T-cell (primary cell): ENCODE measurements at regions of chr3 and their contacts with region 1.

Region 1: DNA sequence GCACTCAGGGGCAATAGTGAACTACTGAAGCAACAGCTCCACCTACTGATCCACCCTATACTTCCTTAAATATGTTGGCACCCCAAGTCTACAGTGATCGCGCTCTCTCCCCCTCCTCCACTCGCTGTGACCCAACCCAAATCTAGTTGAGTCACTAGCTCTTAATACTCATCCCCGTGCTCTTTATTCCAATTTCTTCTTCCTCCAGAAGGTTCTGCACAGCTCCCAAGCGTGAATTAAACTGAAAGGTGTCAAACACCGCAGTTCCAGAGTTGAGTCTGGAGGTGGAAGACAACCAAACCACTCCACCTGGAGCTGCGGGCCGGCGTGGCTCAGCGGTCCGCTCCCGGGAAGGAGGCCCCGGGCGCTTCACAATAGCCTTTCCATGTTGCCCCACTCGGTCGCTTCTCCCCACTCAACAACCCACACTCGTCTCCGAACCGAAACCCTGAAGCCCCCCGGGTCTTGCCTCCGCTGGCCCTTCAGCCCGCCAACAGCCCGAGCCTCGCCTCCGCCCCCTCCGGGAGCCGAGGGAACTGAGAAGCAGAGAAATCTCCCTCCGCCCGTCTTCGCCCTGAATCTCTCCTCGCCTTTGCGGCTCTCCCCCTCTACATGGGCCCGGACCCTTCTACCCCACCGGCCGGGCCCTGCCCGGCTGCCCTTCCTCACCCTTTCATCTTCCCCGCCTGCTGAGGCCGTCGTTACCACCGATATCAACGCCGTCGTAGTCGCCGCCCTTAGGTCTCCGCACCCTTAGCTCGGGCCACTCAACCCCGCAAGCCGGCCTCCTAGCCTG is 578 bp downstream of the NAA50 start:
- DNase-seq: peak; percentile 48 to 93 (median 78)
- ATAC-seq: peak; percentile 68 to 73 (median 70)
- H3K4me3 ChIP-seq: peak overlapping the region; percentile 68 to 91
- H3K4me3 Mint-ChIP-seq: peak overlapping the region; percentile 92 to 100 (median 95)
- H3K27ac ChIP-seq: peak overlapping the region; percentile 100
- H3K27ac Mint-ChIP-seq: peak overlapping the region; percentile 97 to 100
- H3K4me1 ChIP-seq: peaks cover 23 to 25% of the 10 kb centered on the region in 2 experiments
- H3K4me1 Mint-ChIP-seq: peaks cover 67 to 84% (median 73%) of the 10 kb centered on the region in 3 donors
- H3K27me3 ChIP-seq: no peaks in the 10 kb centered on the region
- H3K27me3 Mint-ChIP-seq: no peaks in the 10 kb centered on the region

Region 2: DNA sequence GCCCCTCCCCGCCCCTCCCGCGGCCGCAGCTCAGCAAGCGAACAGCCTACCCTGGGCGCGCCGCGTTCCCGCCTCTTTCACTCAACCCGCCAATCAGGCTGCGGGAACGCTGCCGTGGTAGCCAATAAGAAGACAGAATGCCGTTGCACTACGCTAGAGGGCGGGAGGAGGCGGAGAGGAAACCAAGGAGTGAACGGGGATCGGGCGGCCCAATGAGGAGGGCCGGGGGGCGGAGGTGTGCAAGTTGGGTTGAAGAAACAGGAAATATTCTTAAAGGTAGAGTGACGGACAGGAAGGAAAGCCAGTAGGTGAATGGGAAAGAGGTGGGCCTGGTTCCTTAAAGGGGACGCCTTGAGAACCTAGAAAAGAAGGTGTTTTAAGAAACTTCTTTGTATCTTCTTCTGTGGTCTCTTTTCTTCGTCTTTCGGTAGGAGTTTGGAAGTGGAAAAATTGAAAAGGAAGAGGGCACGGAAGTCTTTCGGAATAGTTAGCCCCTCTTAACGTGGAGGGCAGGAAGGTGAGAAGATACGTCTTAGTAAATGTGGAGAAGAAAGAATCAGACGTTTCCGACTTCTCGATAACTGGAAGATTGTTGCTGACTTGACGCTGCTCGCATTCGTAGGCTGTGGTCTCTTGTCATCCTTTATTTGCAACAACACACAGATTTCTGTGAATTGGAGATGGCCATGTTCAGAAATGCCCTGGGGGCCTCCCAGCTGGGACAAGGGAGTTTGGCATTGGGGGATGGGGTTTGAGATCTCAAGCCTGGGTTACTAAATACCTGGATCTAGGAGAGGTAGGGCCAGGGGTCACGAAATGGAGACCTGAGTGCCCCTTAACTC is 48.6 kb before region 1 on chr3:
- CTCF ChIA-PET with region 1: interaction called, 3 to 10 read pairs
- POLR2A ChIA-PET with region 1: interaction called in 1 of 2 experiments, 15 read pairs
- DNase-seq: peak; percentile 97 to 100 (median 99)
- ATAC-seq: peak; percentile 81 to 85 (median 82)
- H3K4me3 ChIP-seq: peak overlapping the region; percentile 73 to 97
- H3K4me3 Mint-ChIP-seq: no peak overlapping the region
- H3K27ac ChIP-seq: peak overlapping the region; percentile 82
- H3K27ac Mint-ChIP-seq: no peak overlapping the region
- H3K4me1 ChIP-seq: peaks cover 19 to 22% of the 10 kb centered on the region in 2 experiments
- H3K4me1 Mint-ChIP-seq: peaks cover 30 to 33% (median 30%) of the 10 kb centered on the region in 3 donors
- H3K27me3 ChIP-seq: no peaks in the 10 kb centered on the region
- H3K27me3 Mint-ChIP-seq: no peaks in the 10 kb centered on the region

Region 3: DNA sequence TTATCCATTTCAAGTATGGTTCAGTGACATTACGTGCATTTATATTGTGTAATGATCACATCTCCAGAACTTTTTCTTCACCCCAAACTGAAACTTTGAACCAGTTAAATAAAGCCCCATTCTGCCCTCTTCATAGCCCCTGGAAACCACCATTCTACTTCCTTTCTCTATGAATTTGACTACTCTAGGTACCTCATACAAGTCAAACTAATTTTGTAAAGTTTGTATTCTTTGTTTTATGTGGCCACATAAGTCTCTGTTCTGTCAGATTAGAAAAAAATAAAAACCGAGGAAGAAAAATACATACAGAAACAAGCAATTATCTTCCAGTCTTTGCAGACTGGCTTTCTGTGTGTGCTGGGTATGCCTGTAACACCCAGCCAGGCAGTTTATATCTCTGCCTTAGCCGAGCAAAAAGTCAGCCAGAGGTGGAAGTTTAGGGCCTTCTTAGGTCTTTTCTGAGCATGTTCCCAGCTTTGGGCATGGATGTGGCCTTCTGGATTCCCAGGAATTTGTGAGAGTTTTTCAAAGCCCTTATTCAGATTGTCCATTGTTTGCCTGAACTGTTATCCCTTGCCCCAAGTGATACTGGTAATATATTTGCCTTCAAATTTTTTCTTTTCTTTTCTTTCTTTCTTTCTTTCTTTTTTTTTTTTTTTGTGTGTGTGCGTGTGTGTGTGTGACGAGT is 87.2 kb after region 1 on chr3:
- CTCF ChIA-PET with region 1: no interaction called
- POLR2A ChIA-PET with region 1: no interaction called
- DNase-seq: peak in 1 of 35 experiments; percentile 16
- ATAC-seq: peak in 1 of 4 experiments; percentile 84
- H3K4me3 ChIP-seq: no peak overlapping the region
- H3K4me3 Mint-ChIP-seq: no peak overlapping the region
- H3K27ac ChIP-seq: no peak overlapping the region
- H3K27ac Mint-ChIP-seq: peak overlapping the region; percentile 47 to 60
- H3K4me1 ChIP-seq: peaks cover 3 to 4% of the 10 kb centered on the region in 2 experiments
- H3K4me1 Mint-ChIP-seq: peaks cover 0 to 30% (median 20%) of the 10 kb centered on the region in 3 donors
- H3K27me3 ChIP-seq: no peaks in the 10 kb centered on the region
- H3K27me3 Mint-ChIP-seq: peaks cover 0 to 1% of the 10 kb centered on the region in 2 donors

Region 4: GRCh38 chr3:114454551-114455251 is 709.2 kb after region 1 on chr3:
- CTCF ChIA-PET with region 1: no interaction called
- POLR2A ChIA-PET with region 1: no interaction called
- DNase-seq: peak in 1 of 35 experiments; percentile 2
- ATAC-seq: peak in 1 of 4 experiments; percentile 17
- H3K4me3 ChIP-seq: no peak overlapping the region
- H3K4me3 Mint-ChIP-seq: no peak overlapping the region
- H3K27ac ChIP-seq: no peak overlapping the region
- H3K27ac Mint-ChIP-seq: no peak overlapping the region
- H3K4me1 ChIP-seq: peaks cover 0 to 13% of the 10 kb centered on the region in 2 experiments
- H3K4me1 Mint-ChIP-seq: peaks cover 6 to 24% (median 13%) of the 10 kb centered on the region in 3 donors
- H3K27me3 ChIP-seq: no peaks in the 10 kb centered on the region
- H3K27me3 Mint-ChIP-seq: no peaks in the 10 kb centered on the region

Region 5: GRCh38 chr3:114958930-114959329 is 1213.5 kb after region 1 on chr3:
- CTCF ChIA-PET with region 1: no interaction called
- POLR2A ChIA-PET with region 1: no interaction called
- DNase-seq: no peak
- ATAC-seq: no peak
- H3K4me3 ChIP-seq: no peak overlapping the region
- H3K4me3 Mint-ChIP-seq: no peak overlapping the region
- H3K27ac ChIP-seq: no peak overlapping the region
- H3K27ac Mint-ChIP-seq: no peak overlapping the region
- H3K4me1 ChIP-seq: no peaks in the 10 kb centered on the region
- H3K4me1 Mint-ChIP-seq: peaks cover 0 to 13% (median 0%) of the 10 kb centered on the region in 3 donors
- H3K27me3 ChIP-seq: no peaks in the 10 kb centered on the region
- H3K27me3 Mint-ChIP-seq: no peaks in the 10 kb centered on the region